Right ventricle myocardium inferior (tissue), 1 donor: ENCODE measurements at regions of chr9 and their contacts with region 1.

Region 1: GRCh38 chr9:503881-504852 is 289.5 kb downstream of the DOCK8 start:
- DNase-seq: peak; percentile 89
- ATAC-seq: peak; percentile 85

Region 2: GRCh38 chr9:211557-211956 is 292.6 kb before region 1 on chr9:
- intact Hi-C with region 1: no loop called
- DNase-seq: no peak
- ATAC-seq: peak; percentile 59

Region 3: GRCh38 chr9:459491-460444 is 44.4 kb before region 1 on chr9:
- intact Hi-C with region 1: loop called (anchors 5 kb)
- DNase-seq: no peak
- ATAC-seq: no peak

Region 4: DNA sequence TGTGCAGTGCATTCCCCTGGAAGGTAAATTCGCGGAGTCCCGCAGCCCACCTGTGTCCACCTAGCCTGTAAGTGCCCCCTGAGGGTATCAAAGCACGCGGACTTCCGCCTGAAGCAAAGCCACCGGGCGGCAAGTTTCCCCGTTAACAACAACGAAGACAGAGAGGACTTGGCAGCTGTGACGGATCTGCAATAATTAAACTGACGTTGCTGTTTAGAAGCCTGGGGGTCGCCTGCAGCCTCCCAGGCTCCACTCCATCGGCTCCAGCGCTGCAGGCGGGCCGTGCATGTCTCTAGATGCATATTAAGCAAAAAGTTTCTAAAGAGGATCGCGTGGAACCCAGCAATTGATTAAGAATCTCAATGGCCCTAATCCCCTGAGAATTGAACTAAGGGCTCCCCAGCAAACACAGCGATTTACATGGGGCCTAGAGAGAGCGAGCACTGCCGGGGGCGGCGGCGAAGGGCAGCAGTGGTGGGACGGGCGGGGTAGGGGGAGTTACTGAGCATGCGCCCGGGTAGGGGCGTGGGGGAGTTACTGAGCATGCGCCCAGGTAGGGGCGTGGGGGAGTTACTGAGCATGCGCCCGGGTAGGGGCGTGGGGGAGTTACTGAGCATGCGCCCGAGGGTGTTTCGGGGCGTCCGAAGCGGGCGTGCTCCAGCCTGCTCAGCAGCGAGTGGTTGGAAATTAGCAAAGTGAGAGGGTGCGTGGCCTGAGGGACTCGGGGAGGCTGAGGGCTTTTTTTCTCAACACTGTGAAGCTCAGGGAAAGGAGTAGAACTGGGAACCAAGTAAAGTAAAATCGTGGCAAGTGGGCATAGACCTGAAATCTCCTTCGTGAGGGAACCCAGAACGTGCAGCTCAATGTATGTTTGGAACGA is 34.3 kb before region 1 on chr9:
- intact Hi-C with region 1: loop called (anchors 1 kb)
- DNase-seq: peak; percentile 93
- ATAC-seq: peak; percentile 99

Region 5: DNA sequence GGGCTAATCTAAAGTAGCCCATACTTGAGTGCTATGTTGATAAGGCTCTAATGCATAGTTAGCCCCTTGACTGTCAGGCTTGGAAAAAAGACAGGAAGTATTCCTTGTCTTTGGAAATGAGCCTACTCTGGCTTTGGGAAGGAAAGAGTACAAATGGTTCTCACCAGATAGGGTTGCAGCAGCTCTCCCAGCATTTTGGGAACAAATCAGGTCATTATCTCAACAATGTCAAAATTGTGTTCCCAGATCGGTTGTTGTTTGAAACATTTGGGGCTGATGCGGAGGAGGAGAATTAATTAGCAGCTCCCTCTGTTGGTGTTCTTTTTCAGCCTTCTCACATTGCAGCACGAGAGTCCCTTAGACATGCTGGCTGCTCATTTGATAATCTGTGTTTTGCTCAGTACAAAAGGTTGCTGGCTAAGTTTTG is 42.6 kb after region 1 on chr9:
- intact Hi-C with region 1: loop called (anchors 2 kb)
- DNase-seq: no peak
- ATAC-seq: peak; percentile 82

Region 6: DNA sequence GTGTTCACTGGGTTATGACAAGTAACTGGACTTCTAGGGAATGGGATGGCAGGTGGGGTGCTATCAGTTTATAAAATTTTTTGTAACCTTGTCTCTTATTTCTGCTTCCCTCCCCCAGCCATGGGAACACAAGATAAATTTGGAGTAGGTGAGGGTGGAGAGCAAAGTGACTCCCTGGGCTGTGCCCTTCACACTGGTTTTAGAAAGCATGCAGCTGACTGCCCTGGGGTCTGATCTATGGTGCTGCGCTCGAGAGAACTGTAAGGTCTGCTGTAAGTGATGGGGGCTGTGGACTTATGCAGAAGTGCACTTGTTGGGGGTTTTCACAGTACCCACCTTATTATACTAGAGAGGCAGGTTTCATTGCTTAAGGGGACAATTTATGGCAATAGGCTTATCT is 89.6 kb after region 1 on chr9:
- intact Hi-C with region 1: loop called (anchors 5 kb)
- DNase-seq: no peak
- ATAC-seq: peak; percentile 54

Region 7: DNA sequence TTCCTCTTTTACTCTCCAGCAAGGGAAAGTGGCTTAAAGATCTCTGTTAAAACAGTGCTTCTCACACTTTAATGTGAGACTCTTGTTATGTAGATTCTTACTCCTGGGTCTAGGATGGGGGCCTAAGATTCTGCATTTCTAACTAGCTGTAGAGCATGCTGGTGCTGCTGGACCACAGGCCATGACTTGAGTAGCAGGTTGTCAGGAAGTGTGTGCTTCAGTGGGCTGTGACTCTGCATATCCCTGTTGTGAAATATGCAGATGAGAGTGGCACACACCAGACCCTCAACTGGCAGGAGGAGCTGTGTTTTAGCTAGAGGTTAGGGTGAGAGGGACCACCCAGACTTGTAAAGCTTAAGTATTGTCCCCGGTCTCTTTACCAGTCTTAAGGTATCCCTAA is 146.2 kb after region 1 on chr9:
- intact Hi-C with region 1: no loop called
- DNase-seq: no peak
- ATAC-seq: no peak

Region 8: DNA sequence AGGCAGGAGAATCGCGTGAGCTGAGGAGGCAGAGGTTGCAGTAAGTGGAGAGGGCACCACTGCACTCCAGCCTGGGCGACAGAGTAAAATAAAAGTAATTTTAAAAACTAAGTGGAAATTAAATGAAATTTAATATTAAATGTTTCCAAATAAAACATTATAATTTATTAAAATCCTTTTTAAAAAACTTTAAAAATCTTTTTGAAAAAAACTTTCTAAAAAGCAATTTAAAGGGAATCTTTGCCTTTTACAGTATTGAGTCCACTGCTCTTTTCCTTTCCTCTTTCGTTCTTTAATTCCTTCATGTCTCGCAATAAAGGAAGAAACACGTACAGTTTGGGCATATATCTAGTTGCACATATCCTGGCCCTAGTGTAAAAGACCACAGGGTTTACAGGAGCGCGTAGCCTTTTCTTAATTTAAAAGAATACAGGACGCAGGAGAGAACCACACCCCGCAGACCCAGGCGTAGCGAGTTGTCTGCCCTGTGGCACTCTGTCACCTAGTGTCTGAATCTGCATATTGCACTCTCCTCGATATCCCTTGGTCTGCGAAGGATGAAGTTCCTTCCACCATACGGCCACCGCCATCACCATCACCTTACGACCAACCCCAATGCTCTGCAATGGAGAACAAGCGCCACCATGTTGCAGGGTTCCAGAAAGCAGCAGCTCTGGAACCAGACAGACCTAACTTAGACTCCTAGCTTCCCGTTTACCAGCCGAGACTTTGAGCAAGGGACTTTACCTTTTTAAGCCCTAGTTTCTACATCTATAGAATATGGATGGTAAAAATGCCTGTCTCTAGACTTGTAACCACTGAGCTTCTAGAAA is 259.7 kb after region 1 on chr9:
- intact Hi-C with region 1: loop called (anchors 5 kb)
- DNase-seq: no peak
- ATAC-seq: peak; percentile 95